Activated T-helper 2 cell treated with anti-CD3 and anti-CD28 coated beads, Interferon-gamma antibody, Interleukin-2, Interleukin-4, amounts not matched to agents 10 μg/mL and 5 μg/mL and 100 μg/mL, durations not matched to agents 14 hours and 24 hours and 36 hours (primary cell): ENCODE measurements at regions of chr2 and their contacts with region 1.

Region 1: GRCh38 chr2:128027801-128028667 is at the start of gene SAP130:
- DNase-seq: peak; percentile 98
- H3K4me3 Mint-ChIP-seq: peak within 1 kb of the TSS; percentile 97
- H3K27ac Mint-ChIP-seq: peak within 1 kb of the TSS; percentile 85
- H3K4me1 Mint-ChIP-seq: peaks cover 12% of the 10 kb centered on the region
- H3K27me3 Mint-ChIP-seq: peaks cover 2% of the 10 kb centered on the region
- total RNA-seq, gene SAP130: 33.1 and 36.5 TPM in 2 replicates

Region 2: DNA sequence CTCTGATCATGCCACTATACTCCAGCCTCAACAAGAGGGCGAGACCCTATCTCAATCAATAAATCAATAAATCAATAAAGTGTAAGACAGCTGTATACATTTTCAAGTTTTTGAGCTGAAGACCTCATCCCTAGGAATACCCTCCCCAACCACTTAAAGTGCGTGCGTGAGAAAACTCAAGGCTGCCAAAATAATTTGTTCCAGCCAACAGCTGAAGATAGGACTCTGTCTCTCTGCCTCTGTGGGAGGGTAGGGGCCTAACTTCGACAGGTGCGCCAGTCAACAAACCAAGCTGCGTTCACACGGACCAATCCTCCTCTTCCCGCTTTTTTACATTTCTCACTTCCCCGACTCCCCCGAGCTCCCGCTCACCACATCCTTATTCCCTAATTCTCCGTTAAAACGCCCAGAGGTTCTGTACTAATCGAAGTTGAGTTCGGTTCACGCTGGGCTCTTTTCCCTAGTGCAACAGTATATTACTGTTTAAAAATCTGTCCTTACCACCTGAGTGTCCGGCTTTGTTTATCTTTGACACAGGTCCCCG is 170.7 kb before region 1 on chr2:
- intact Hi-C with region 1: loop called (anchors 2 kb)
- DNase-seq: peak; percentile 13
- H3K4me3 Mint-ChIP-seq: peak overlapping the region; percentile 100
- H3K27ac Mint-ChIP-seq: peak overlapping the region; percentile 91
- H3K4me1 Mint-ChIP-seq: peaks cover 26% of the 10 kb centered on the region
- H3K27me3 Mint-ChIP-seq: no peaks in the 10 kb centered on the region

Region 3: DNA sequence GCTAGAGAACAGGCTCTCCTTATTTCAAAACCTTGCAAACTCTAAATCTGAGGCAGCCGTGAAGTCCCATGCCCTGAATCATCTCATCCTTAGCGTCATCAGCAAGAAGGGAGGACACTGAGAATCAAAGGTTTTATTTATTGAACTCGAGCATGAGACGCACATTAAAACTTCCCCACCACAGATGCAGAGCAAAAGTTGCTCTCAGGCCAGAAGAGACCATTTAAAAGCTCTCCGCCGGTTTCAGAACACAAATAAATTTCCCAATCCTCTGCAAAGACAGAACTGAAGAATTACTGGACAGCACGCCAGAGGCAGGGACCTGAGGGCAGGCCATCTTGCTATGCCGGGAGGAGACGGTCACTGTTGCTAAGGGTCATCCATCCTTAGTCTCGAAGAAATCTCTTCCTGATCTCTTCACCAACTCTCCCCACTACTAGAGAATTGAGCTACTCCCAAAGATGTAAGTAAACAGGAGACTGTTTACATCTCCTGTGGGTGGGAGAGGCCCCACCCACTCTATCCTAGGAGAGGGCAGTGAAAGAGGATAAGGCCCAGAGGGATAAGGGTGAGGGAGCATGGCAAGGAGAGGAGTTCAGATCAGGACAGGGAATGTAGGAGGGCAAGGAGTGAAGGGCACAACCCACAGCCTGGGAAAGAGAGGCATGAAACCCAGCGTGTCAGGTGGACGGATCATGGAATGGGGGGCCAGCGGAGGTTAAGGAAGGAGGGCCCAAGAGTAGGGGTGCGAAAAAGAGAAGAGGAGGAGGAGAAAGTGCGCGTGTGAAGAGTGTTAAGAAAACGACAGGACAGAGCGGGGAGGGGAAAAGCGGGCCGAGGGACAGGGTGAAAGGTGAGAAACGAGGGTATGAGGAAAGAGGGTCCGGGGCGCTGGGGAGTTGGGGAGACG is 143.3 kb before region 1 on chr2:
- intact Hi-C with region 1: loop called (anchors 10 kb)
- DNase-seq: no peak
- H3K4me3 Mint-ChIP-seq: peak overlapping the region; percentile 95
- H3K27ac Mint-ChIP-seq: peak overlapping the region; percentile 88
- H3K4me1 Mint-ChIP-seq: peaks cover 27% of the 10 kb centered on the region
- H3K27me3 Mint-ChIP-seq: no peaks in the 10 kb centered on the region

Region 4: GRCh38 chr2:128041561-128041960 is 13.5 kb after region 1 on chr2:
- intact Hi-C with region 1: no loop called
- DNase-seq: no peak
- H3K4me3 Mint-ChIP-seq: no peak overlapping the region
- H3K27ac Mint-ChIP-seq: no peak overlapping the region
- H3K4me1 Mint-ChIP-seq: no peaks in the 10 kb centered on the region
- H3K27me3 Mint-ChIP-seq: no peaks in the 10 kb centered on the region

Region 5: GRCh38 chr2:128090945-128091725 is 63.1 kb after region 1 on chr2 and contains the start of gene UGGT1:
- intact Hi-C with region 1: loop called (anchors 1 kb)
- DNase-seq: peak; percentile 93
- H3K4me3 Mint-ChIP-seq: peak within 1 kb of the TSS; percentile 94
- H3K27ac Mint-ChIP-seq: peak within 1 kb of the TSS; percentile 92
- H3K4me1 Mint-ChIP-seq: peaks cover 39% of the 10 kb centered on the region
- H3K27me3 Mint-ChIP-seq: no peaks in the 10 kb centered on the region
- total RNA-seq, gene UGGT1: 72.4 and 74.7 TPM in 2 replicates